ENCODE measurements at regions of chr20 and their contacts with region 1.

Region 1: GRCh38 chr20:884983-885952 is 30.9 kb downstream of the ANGPT4 start:
- DNase-seq: no peak
- ATAC-seq: peak; percentile 76
- H3K4me3 ChIP-seq: no peak overlapping the region
- H3K27ac ChIP-seq: no peak overlapping the region
- H3K4me1 ChIP-seq: no peaks in the 10 kb centered on the region
- H3K27me3 ChIP-seq: peaks cover 2 to 11% of the 10 kb centered on the region in 2 experiments; a peak in 4 of 5 replicates
- CTCF ChIP-seq: no peak; the same call in 1 of the 2 replicates
- EP300 ChIP-seq: no peak
- POLR2A ChIP-seq: no peak
- RAD21 ChIP-seq: no peak

Region 2: DNA sequence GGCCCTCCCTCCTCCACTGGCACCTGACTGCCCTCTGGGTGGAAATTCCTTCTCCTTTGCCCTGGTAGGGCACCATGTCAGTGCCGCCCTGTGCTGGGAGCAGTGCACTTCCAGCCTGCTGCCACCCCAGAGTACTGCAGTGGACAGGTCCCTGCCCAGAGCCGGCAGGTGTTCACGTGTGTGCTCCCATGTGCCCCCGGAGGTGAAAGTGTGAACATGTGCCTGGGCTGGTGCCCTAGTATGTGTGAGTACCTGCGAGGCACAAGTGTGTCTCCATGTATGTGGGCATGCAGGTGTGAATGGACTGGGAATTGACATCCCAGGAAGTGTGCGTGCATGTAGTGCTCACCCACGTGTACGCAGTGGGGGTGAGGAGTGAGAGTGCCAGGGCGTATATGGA is 414.3 kb after region 1 on chr20:
- CTCF ChIA-PET with region 1: no interaction called
- POLR2A ChIA-PET with region 1: no interaction called
- in situ Hi-C with region 1: no loop called
- intact Hi-C with region 1: loop called (anchors 10 kb)
- DNase-seq: no peak
- ATAC-seq: peak; percentile 68
- H3K4me3 ChIP-seq: no peak overlapping the region
- H3K27ac ChIP-seq: no peak overlapping the region
- H3K4me1 ChIP-seq: no peaks in the 10 kb centered on the region
- H3K27me3 ChIP-seq: peaks cover 7 to 60% of the 10 kb centered on the region in 2 experiments; a peak in 3 of 5 replicates
- CTCF ChIP-seq: no peak
- EP300 ChIP-seq: no peak
- POLR2A ChIP-seq: no peak
- RAD21 ChIP-seq: no peak